Activated CD4-positive, alpha-beta memory T cell treated with anti-CD3 and anti-CD28 coated beads for 36 hours (primary cell): ENCODE measurements at regions of chr1 and their contacts with region 1.

Region 1: GRCh38 chr1:95233737-95234500 is at the start of gene RWDD3:
- DNase-seq: peak; percentile 95
- H3K4me3 Mint-ChIP-seq: peak within 1 kb of the TSS; percentile 86
- H3K27ac Mint-ChIP-seq: peak within 1 kb of the TSS; percentile 70
- H3K4me1 Mint-ChIP-seq: peaks cover 41% of the 10 kb centered on the region
- H3K27me3 Mint-ChIP-seq: peaks cover 7% of the 10 kb centered on the region
- total RNA-seq, gene RWDD3: 10.8 to 13.9 TPM

Region 2: DNA sequence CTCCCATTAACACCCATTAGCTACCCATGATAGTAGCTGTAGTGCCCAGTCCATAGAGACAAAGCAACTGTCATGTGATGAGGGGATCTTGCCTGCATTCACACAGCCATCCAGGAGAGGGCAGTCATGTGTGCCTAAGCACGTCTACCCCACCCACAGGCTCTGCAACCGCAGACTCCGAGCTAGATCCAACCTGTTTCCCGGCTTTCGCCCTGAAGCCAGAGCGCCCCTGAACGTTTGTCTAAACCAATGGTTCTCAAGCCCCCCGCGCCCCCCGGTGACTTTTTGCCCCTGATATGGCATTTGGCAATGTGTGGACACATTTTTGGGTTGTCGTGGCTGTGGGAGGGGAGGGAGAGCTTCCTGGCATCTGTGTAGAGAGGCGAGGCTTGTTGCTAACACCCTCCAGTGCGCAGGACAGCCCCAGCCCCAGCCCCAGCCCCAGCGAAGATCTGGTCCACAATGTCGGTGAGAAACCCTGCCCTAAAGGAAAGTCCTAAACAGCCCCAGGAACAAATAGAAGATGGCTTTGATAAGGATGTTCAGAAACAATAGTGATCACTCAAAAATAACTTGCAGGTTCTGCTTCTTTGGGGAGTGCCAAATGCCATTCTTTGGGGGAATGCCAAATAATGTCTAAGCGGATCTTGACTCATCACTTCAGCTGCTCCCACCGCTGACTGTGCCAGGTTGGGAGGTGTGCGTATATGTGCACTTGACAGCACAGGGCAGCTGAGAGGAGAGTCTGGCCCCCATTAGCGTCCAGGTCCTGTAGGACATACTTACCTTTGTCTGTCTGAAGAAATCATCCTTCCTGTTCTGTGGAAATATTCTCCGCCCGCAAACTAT is 379.2 kb before region 1 on chr1:
- CTCF ChIA-PET with region 1: interaction called, 25 read pairs
- POLR2A ChIA-PET with region 1: no interaction called
- intact Hi-C with region 1: loop called (anchors 1 kb)
- DNase-seq: peak; percentile 86
- H3K4me3 Mint-ChIP-seq: no peak overlapping the region
- H3K27ac Mint-ChIP-seq: no peak overlapping the region
- H3K4me1 Mint-ChIP-seq: no peaks in the 10 kb centered on the region
- H3K27me3 Mint-ChIP-seq: peaks cover 1% of the 10 kb centered on the region

Region 3: DNA sequence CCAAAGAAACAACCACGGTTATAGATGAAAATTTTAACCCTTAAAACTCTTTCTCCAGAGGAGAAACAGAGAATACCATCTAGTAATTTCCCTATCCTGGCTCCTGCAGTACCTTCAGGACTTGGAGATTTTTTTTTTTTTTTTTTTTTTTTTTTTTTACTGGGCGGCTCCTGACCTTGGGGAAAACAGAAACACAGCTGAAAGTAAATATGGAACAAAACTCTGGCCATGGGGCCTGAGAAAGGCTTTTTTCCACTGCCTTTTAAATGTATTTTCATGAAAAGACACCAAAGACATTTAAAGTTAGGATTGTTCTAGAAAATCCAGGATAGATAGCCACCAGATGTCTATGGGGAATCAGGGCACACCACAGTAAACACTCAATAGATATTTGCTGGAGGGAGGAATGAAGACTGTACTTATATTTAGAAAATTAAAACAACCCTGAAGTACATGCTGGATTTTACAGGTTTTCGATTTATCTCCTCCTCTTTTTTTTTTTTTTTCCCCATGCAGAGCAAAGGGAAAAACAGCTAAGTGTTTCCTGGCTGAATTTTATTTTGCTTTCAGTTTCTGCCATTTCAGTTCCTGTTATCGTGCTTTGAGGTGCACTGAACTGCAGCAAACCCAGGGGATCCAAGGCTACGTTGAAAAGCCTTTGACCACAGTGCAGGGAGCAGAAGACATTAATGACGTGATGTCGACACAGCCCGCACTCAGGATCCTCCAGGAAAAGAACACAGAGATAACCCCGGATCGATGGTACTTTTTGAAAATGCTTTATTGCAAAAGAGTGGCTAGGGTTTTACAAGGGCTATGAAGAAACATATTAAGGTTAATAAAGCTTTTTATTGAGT is 271.3 kb before region 1 on chr1:
- CTCF ChIA-PET with region 1: no interaction called
- POLR2A ChIA-PET with region 1: no interaction called
- intact Hi-C with region 1: loop called (anchors 10 kb)
- DNase-seq: peak; percentile 28
- H3K4me3 Mint-ChIP-seq: peak overlapping the region; percentile 83
- H3K27ac Mint-ChIP-seq: peak overlapping the region; percentile 88
- H3K4me1 Mint-ChIP-seq: peaks cover 6% of the 10 kb centered on the region
- H3K27me3 Mint-ChIP-seq: no peaks in the 10 kb centered on the region

Region 4: DNA sequence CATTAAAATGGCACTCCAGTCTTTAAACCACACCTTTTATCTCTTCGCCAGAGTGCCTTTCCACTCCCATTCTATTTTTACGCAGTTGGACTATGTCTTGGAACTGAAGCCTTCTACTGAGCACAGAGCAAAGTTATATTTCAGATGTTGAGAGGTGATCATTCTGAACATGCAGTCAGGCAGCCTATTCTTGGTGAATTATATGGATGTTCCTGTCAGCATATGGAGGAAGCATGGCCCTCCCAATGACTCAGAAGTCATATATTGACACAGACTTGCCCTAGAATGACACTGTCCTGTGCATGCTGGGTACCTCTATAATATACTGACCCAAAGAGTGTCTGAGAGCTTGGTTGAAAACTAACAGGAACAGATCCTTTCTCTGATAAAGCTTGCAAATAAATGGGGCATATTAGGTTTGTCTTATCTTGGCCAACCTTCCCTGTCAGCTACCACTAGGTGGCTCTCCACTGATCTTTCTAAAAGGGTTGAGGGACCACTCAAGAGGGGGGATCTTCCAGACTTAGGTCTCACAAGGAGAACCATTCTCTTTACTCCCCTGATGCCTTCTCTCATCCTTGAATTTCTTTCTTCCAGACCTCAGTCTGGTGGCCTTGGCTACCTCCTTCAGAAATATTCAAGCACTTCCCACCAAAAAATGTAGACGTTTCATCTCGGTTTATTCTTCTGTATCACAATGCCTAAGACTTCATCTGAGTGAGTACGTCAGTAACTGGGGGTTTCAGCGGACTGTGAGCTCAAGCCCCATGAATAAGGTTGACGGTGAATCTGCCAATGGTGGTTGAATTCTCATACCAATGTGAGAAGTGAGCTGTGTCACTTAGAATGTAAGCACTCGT is 149.4 kb before region 1 on chr1:
- CTCF ChIA-PET with region 1: interaction called, 31 read pairs
- POLR2A ChIA-PET with region 1: no interaction called
- intact Hi-C with region 1: loop called (anchors 1 kb)
- DNase-seq: peak; percentile 15
- H3K4me3 Mint-ChIP-seq: no peak overlapping the region
- H3K27ac Mint-ChIP-seq: no peak overlapping the region
- H3K4me1 Mint-ChIP-seq: no peaks in the 10 kb centered on the region
- H3K27me3 Mint-ChIP-seq: peaks cover 6% of the 10 kb centered on the region

Region 5: GRCh38 chr1:95223110-95223509 is 10.8 kb before region 1 on chr1:
- CTCF ChIA-PET with region 1: interaction called, 17 read pairs
- POLR2A ChIA-PET with region 1: interaction called, 5 read pairs
- intact Hi-C with region 1: no loop called
- DNase-seq: no peak
- H3K4me3 Mint-ChIP-seq: no peak overlapping the region
- H3K27ac Mint-ChIP-seq: no peak overlapping the region
- H3K4me1 Mint-ChIP-seq: no peaks in the 10 kb centered on the region
- H3K27me3 Mint-ChIP-seq: peaks cover 10% of the 10 kb centered on the region

Region 6: DNA sequence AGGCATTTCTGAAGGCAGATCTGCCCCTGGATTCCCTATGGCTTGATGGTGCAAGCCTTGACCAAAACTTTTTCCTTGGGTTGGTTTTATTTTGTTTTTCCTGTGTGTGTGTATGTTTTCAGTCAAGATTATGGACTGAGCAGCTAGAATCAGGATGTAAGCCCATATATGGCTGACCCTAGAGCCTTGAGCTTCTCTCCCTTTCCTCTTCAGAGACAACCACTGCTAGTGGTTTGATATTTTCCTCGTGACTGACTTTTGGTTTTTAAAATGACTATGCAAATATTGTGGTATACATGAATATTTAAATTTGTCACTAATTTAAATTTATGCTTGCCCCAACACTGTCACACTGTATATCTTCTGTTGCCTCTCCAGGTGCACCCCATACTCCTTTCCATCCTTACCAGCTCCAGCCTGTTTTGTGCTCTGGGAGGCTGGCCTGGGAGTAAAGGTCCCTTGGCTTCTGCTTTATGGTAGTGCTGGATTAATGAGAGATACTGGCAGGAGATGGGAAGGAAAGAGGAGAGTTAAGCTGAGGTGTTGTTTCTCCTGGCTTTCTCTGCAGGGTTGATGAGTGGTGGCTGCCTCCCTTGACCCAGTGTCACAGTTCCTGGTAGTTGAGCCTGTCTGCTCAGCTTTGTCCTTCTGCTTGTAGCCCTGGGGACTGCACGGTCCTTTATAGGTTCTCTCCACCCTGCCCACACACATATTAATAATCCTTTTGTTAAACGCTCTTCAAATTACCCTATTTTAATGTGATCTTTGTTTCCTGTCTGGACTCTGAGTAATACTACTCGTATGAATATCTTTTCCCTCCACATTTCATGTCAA is 44.5 kb after region 1 on chr1:
- CTCF ChIA-PET with region 1: no interaction called
- POLR2A ChIA-PET with region 1: no interaction called
- intact Hi-C with region 1: no loop called
- DNase-seq: no peak
- H3K4me3 Mint-ChIP-seq: no peak overlapping the region
- H3K27ac Mint-ChIP-seq: no peak overlapping the region
- H3K4me1 Mint-ChIP-seq: no peaks in the 10 kb centered on the region
- H3K27me3 Mint-ChIP-seq: no peaks in the 10 kb centered on the region

Region 7: GRCh38 chr1:95323123-95323522 is 89.2 kb after region 1 on chr1:
- CTCF ChIA-PET with region 1: no interaction called
- POLR2A ChIA-PET with region 1: no interaction called
- intact Hi-C with region 1: no loop called
- DNase-seq: no peak
- H3K4me3 Mint-ChIP-seq: no peak overlapping the region
- H3K27ac Mint-ChIP-seq: no peak overlapping the region
- H3K4me1 Mint-ChIP-seq: no peaks in the 10 kb centered on the region
- H3K27me3 Mint-ChIP-seq: peaks cover 4% of the 10 kb centered on the region

Region 8: GRCh38 chr1:96721416-96722160 is 1487.7 kb after region 1 on chr1 and contains the start of gene PTBP2:
- CTCF ChIA-PET with region 1: no interaction called
- POLR2A ChIA-PET with region 1: no interaction called
- intact Hi-C with region 1: loop called (anchors 5 kb)
- DNase-seq: peak; percentile 88
- H3K4me3 Mint-ChIP-seq: peak within 1 kb of the TSS; percentile 89
- H3K27ac Mint-ChIP-seq: peak within 1 kb of the TSS; percentile 80
- H3K4me1 Mint-ChIP-seq: peaks cover 23% of the 10 kb centered on the region
- H3K27me3 Mint-ChIP-seq: no peaks in the 10 kb centered on the region
- total RNA-seq, gene PTBP2: 9.2 to 10.1 TPM